ENCODE measurements at regions of chr1 and their contacts with region 1.

Region 1: DNA sequence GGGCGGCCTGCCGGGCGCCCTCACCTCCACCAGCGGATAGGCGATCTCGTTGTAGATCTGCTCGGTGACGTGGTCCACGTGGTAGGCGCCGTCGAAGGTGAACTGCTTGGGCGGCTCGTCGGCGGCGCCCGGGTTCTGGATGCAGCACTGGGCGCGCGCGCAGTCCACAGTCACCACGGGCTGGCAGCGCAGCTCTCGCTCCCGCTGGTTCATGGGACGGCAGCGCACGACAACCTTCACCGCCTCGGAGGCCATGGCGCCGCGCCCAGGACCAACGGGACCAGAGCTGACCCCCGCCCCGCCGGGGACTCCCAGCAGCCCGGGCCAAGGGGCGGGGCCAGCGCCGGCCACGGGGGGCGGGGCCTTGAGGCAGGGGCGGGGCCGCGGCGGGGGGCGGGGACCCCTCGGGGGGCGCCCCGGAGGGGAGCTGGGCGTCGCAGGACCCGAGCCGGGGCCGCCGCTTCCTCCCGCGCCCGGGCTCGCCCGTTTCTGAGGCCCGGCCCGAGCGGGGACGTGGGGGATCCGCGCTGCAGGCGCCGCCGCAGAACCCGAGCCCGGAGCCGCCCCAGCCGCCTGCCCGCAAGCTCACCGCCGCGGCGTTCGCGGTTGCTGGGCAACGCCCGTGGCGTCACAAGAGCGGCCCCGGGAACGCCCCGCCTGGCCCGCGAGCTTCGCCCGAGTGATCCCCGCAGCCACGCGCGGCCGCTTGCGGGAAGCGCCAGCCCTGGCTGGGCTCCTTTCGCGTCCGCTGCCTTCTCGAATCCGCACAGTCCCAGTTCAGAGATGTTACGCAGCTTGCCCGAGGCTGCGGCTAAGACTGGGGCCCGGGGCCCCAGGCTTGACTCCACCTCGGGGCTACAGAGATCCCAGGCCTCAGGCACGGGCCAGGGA is at the start of gene KIF17:
- DNase-seq: peak; percentile 39
- H3K4me3 ChIP-seq: peak within 1 kb of the TSS; percentile 58
- H3K27ac ChIP-seq: no peak within 1 kb of the TSS
- H3K27me3 ChIP-seq: no peaks in the 10 kb centered on the region
- CTCF ChIP-seq: no peak
- polyA plus RNA-seq, gene KIF17: 2.7 and 2.8 TPM in 2 replicates

Region 2: GRCh38 chr1:20732588-20733360 is 15.1 kb after region 1 on chr1 and contains the start of gene SH2D5:
- CTCF ChIA-PET with region 1: no interaction called
- POLR2A ChIA-PET with region 1: interaction called, 10 read pairs
- DNase-seq: peak; percentile 95
- H3K4me3 ChIP-seq: peak within 1 kb of the TSS; percentile 68
- H3K27ac ChIP-seq: peak within 1 kb of the TSS; percentile 98
- H3K27me3 ChIP-seq: no peaks in the 10 kb centered on the region
- CTCF ChIP-seq: peak; percentile 38
- polyA plus RNA-seq, gene SH2D5: 4.9 and 6.5 TPM in 2 replicates